PC-9 (cell line): ENCODE measurements at regions of chr18 and their contacts with region 1.

Region 1: GRCh38 chr18:9516437-9517064 is 41.2 kb downstream of the RALBP1 start:
- DNase-seq: no peak
- H3K4me3 ChIP-seq: no peak overlapping the region
- H3K27ac ChIP-seq: no peak overlapping the region
- H3K4me1 ChIP-seq: peaks cover 29% of the 10 kb centered on the region
- H3K27me3 ChIP-seq: no peaks in the 10 kb centered on the region
- CTCF ChIP-seq: peak; percentile 90

Region 2: DNA sequence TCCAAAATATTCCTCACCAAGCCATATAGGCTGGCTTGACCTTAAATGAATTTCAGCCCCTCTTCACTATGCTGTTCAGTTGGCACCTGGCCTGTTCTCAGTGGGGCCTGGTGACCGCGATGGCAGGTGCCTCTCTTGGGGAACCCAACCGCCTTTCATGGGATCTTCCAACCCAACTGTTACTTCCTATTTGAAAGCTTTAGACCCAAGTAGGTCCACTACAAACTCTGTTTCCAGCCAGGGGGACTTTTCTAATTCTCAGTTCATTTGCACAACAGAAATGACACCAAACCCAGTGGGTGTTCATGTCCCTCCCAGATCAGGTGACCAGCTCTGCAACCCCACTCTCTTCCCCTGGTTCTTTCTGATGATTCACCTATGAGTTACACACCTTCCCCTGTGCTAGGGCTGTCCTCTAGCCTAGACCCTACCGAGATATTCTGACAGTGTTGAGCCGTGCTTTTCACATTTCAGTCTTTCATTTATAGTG is 449.7 kb before region 1 on chr18:
- CTCF ChIA-PET with region 1: no interaction called
- POLR2A ChIA-PET with region 1: no interaction called
- intact Hi-C with region 1: loop called (anchors 2 kb)
- DNase-seq: no peak
- H3K4me3 ChIP-seq: no peak overlapping the region
- H3K27ac ChIP-seq: no peak overlapping the region
- H3K4me1 ChIP-seq: peaks cover 40% of the 10 kb centered on the region
- H3K27me3 ChIP-seq: no peaks in the 10 kb centered on the region
- CTCF ChIP-seq: no peak

Region 3: GRCh38 chr18:9366192-9366591 is 150.4 kb before region 1 on chr18:
- CTCF ChIA-PET with region 1: interaction called, 7 read pairs
- POLR2A ChIA-PET with region 1: no interaction called
- intact Hi-C with region 1: loop called (anchors 1 kb)
- DNase-seq: peak in 1 of 2 experiments; percentile 71
- H3K4me3 ChIP-seq: no peak overlapping the region
- H3K27ac ChIP-seq: no peak overlapping the region
- H3K4me1 ChIP-seq: peaks cover 40% of the 10 kb centered on the region
- H3K27me3 ChIP-seq: no peaks in the 10 kb centered on the region
- CTCF ChIP-seq: no peak

Region 4: DNA sequence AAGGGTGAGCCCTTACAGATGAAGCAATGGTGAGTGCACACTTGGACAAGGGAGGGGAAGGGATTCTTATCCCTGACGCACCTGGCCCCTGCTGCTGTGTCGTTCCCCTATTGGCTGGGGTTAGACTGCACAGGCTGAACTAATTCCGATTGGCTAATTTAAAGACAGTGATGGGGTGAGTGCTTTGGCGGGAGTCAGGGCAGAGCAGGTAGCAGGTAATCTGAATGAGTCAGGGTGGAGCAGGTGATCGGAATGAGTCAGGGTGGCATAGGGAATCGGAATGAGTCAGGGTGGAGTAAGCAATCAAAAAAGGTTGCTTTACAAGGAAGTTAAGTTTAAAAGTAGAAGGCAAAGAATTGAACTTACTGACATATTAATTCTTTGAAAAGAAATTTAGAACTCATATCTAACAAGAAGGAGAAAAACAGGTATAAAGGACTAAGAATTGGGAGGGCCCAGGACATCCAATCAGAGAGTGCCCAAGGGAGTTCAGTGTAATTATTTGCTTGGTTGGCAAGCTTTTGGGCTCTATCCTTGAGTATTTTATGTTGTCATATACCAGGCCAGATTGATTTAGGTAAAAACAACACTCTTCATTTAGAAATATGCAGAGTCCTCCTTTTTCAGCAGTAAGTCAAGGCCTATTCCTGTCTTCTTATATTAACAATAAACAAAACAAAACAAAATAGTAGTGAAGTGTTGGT is 93.6 kb before region 1 on chr18:
- CTCF ChIA-PET with region 1: no interaction called
- POLR2A ChIA-PET with region 1: no interaction called
- intact Hi-C with region 1: loop called (anchors 2 kb)
- DNase-seq: peak; percentile 70 to 85
- H3K4me3 ChIP-seq: peak overlapping the region; percentile 8; the same call in 1 of the 2 replicates
- H3K27ac ChIP-seq: peak overlapping the region; percentile 93
- H3K4me1 ChIP-seq: peaks cover 17% of the 10 kb centered on the region
- H3K27me3 ChIP-seq: no peaks in the 10 kb centered on the region
- CTCF ChIP-seq: no peak

Region 5: DNA sequence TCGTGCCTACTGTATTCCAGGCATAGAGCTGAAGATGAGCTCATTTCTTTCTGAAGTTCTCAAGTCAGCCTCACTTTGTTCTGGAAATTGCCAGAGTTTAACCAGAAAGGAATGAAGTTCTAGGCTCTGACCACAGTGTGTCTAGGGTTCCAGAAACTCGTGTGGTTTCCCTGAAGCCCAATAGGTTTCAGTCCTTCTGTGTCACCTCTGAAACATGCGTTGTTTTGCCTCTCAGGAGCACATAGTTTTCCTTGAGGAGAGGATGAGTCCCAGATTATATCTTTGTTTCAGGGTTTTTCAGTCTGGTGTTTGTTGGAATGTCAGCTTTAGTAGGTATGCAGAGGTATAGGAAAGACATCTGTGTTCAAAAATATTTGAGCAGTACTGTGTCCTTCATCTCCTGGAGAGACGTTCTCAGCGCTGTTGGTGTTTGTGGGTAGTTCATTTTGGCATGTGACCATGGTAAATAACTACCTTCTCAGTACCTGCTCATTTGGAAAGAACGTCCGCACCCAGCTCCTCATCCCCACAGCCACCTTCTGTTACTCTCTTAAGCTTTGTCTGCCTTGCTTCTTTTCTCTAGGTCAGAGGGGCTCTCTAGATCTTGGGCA is 15.3 kb after region 1 on chr18:
- CTCF ChIA-PET with region 1: no interaction called
- POLR2A ChIA-PET with region 1: no interaction called
- intact Hi-C with region 1: no loop called
- DNase-seq: no peak
- H3K4me3 ChIP-seq: no peak overlapping the region
- H3K27ac ChIP-seq: no peak overlapping the region
- H3K4me1 ChIP-seq: peaks cover 2% of the 10 kb centered on the region; the same call in 1 of the 2 replicates
- H3K27me3 ChIP-seq: no peaks in the 10 kb centered on the region
- CTCF ChIP-seq: no peak